ENCODE measurements at regions of chr7 and their contacts with region 1.

Region 1: GRCh38 chr7:21448974-21449373 is 21.1 kb downstream of the SP4 start:
- DNase-seq: no peak
- ATAC-seq: no peak
- H3K4me3 ChIP-seq: no peak overlapping the region
- H3K4me3 Mint-ChIP-seq: no peak overlapping the region
- H3K27ac ChIP-seq: no peak overlapping the region
- H3K27ac Mint-ChIP-seq: no peak overlapping the region
- H3K4me1 ChIP-seq: peaks cover 19% of the 10 kb centered on the region
- H3K4me1 Mint-ChIP-seq: peaks cover 54% of the 10 kb centered on the region
- H3K27me3 ChIP-seq: no peaks in the 10 kb centered on the region
- H3K27me3 Mint-ChIP-seq: no peaks in the 10 kb centered on the region
- CTCF ChIP-seq: no peak

Region 2: GRCh38 chr7:20557116-20557515 is 891.9 kb before region 1 on chr7:
- CTCF ChIA-PET with region 1: no interaction called
- POLR2A ChIA-PET with region 1: no interaction called
- intact Hi-C with region 1: no loop called
- DNase-seq: no peak
- ATAC-seq: no peak
- H3K4me3 ChIP-seq: no peak overlapping the region
- H3K4me3 Mint-ChIP-seq: no peak overlapping the region
- H3K27ac ChIP-seq: no peak overlapping the region
- H3K27ac Mint-ChIP-seq: no peak overlapping the region
- H3K4me1 ChIP-seq: no peaks in the 10 kb centered on the region
- H3K4me1 Mint-ChIP-seq: no peaks in the 10 kb centered on the region
- H3K27me3 ChIP-seq: no peaks in the 10 kb centered on the region
- H3K27me3 Mint-ChIP-seq: no peaks in the 10 kb centered on the region
- CTCF ChIP-seq: no peak

Region 3: GRCh38 chr7:21480693-21481403 is 31.9 kb after region 1 on chr7:
- CTCF ChIA-PET with region 1: no interaction called
- POLR2A ChIA-PET with region 1: no interaction called
- intact Hi-C with region 1: loop called in 1 of 2 experiments (anchors 5 kb)
- DNase-seq: no peak
- ATAC-seq: no peak
- H3K4me3 ChIP-seq: no peak overlapping the region
- H3K4me3 Mint-ChIP-seq: no peak overlapping the region
- H3K27ac ChIP-seq: no peak overlapping the region
- H3K27ac Mint-ChIP-seq: peak overlapping the region; percentile 45
- H3K4me1 ChIP-seq: no peaks in the 10 kb centered on the region
- H3K4me1 Mint-ChIP-seq: peaks cover 55% of the 10 kb centered on the region
- H3K27me3 ChIP-seq: no peaks in the 10 kb centered on the region
- H3K27me3 Mint-ChIP-seq: no peaks in the 10 kb centered on the region
- CTCF ChIP-seq: no peak

Measured in CD8-positive, alpha-beta T cell (primary cell).